ENCODE measurements at regions of chr13 and their contacts with region 1.

Region 1: DNA sequence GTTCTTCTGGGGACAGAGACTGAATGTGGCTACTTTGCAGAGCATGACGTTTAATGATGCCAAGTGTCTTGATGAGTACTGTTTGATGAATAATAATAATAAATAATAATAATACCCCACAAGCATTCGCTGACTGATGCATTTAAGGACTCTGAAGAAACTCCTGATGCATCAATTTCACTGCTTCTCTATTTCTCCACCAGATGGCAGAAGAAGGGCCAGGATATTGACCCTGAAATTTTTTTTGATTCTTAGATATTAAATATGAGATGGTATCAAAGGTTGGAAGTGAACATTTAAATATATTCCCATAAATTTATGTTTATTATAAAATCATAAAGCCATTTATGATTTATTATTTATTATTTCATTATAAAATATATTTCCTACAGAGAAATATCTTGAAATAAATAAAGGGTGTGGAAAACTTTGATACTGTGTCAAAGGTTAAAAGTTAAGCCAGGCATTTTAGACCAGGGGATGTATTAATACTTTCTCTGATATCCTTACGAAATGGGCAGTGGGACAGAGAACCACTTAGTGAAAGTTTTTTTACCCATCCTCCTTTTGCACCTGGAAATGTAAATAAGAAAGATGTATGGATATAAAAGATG is 170.9 kb downstream of the LACC1 start:
- DNase-seq: peak in 1 of 2 donors; percentile 13
- ATAC-seq: peak in 1 of 8 donors; percentile 20
- H3K4me3 ChIP-seq: no peak overlapping the region
- H3K27ac ChIP-seq: no peak overlapping the region
- H3K4me1 ChIP-seq: peaks cover 0 to 15% (median 2%) of the 10 kb centered on the region in 9 donors
- H3K27me3 ChIP-seq: peaks cover 0 to 6% (median 0%) of the 10 kb centered on the region in 7 donors
- CTCF ChIP-seq: peak; percentile 75 to 94 (median 86)

Region 2: DNA sequence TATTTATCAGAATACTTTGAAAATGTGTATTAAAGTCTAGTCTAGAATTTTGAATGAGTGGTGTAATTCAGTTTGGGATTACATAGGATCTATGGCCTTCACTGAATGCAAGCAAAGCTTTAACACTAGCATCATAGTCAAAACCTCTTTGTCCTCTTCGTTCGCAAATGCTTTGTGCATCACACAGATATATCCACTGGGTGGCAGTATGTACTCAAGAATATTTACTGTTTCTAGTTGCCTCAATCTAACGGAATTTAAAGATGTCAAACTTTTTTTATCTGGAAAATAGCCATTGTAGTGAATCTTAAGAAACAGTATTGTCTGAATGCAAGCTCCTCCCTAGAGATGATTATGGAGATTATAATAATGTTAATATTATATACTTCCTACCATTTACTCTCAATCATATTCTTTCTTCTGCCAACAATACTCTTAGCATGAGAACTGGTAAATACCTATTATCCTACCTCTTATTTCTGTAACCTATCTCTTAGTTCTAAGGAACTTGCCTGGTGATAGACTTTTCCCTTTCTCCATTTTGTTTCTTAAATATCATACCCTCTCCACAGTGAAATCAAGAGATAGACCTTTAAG is 145.0 kb before region 1 on chr13:
- intact Hi-C with region 1: loop called (anchors 2 to 10 kb)
- DNase-seq: peak in 1 of 2 donors; percentile 42
- ATAC-seq: peak in 6 of 8 donors; percentile 63 to 78 (median 68)
- H3K4me3 ChIP-seq: no peak overlapping the region
- H3K27ac ChIP-seq: no peak overlapping the region
- H3K4me1 ChIP-seq: peaks cover 0 to 17% (median 5%) of the 10 kb centered on the region in 9 donors
- H3K27me3 ChIP-seq: peaks cover 0 to 18% (median 0%) of the 10 kb centered on the region in 7 donors
- CTCF ChIP-seq: peak; percentile 65 to 90 (median 81)

Region 3: DNA sequence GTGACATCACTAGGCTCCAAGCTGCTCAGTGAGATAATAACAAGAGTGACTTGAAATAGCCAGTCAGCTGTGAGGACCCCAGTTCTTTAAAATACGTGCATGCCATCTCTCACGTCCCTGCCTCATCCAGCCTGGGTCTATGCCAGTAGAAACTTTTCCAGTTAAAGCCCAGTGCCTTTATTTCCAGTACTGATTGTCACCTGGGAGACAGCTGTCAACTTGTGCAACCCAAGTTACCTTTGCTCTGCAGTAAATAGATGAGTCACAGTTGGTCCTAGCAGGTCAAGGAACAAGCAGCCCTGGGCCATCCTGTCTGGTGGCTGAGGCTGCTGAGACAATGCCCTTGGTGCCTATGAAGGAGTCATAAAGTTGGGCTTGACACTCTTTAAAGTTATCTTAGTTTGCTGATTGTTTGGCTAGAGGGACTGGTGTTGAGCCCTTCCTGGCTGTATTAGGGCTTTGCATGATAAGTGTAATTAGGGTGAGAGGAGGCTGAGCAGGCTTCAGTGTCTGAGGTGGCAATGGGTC is 57.8 kb after region 1 on chr13:
- intact Hi-C with region 1: loop called in 4 of 10 experiments (anchors 2 to 5 kb)
- DNase-seq: peak; percentile 53 to 54
- ATAC-seq: peak; percentile 56 to 95 (median 78)
- H3K4me3 ChIP-seq: no peak overlapping the region
- H3K27ac ChIP-seq: peak overlapping the region; percentile 56 to 80 (median 72)
- H3K4me1 ChIP-seq: peaks cover 14 to 80% (median 42%) of the 10 kb centered on the region in 9 donors
- H3K27me3 ChIP-seq: no peaks in the 10 kb centered on the region
- CTCF ChIP-seq: no peak

Region 4: GRCh38 chr13:44141725-44142539 is 91.4 kb after region 1 on chr13:
- intact Hi-C with region 1: loop called in 5 of 10 experiments (anchors 5 to 10 kb)
- DNase-seq: peak; percentile 98 to 99
- ATAC-seq: peak; percentile 99 to 100 (median 100)
- H3K4me3 ChIP-seq: peak overlapping the region; percentile 50 to 79 (median 58)
- H3K27ac ChIP-seq: peak overlapping the region; percentile 91 to 99 (median 96)
- H3K4me1 ChIP-seq: peaks cover 5 to 22% (median 10%) of the 10 kb centered on the region in 9 donors
- H3K27me3 ChIP-seq: no peaks in the 10 kb centered on the region
- CTCF ChIP-seq: peak in 2 of 9 donors; percentile 9 to 21

Region 5: GRCh38 chr13:44293908-44294735 is 243.6 kb after region 1 on chr13:
- intact Hi-C with region 1: loop called in 1 of 10 experiments (anchors 10 kb)
- DNase-seq: no peak
- ATAC-seq: peak in 4 of 8 donors; percentile 37 to 64 (median 56)
- H3K4me3 ChIP-seq: no peak overlapping the region
- H3K27ac ChIP-seq: peak overlapping the region in 6 of 10 donors; percentile 12 to 59 (median 36)
- H3K4me1 ChIP-seq: peaks cover 0 to 38% (median 29%) of the 10 kb centered on the region in 9 donors
- H3K27me3 ChIP-seq: no peaks in the 10 kb centered on the region
- CTCF ChIP-seq: no peak

Region 6: DNA sequence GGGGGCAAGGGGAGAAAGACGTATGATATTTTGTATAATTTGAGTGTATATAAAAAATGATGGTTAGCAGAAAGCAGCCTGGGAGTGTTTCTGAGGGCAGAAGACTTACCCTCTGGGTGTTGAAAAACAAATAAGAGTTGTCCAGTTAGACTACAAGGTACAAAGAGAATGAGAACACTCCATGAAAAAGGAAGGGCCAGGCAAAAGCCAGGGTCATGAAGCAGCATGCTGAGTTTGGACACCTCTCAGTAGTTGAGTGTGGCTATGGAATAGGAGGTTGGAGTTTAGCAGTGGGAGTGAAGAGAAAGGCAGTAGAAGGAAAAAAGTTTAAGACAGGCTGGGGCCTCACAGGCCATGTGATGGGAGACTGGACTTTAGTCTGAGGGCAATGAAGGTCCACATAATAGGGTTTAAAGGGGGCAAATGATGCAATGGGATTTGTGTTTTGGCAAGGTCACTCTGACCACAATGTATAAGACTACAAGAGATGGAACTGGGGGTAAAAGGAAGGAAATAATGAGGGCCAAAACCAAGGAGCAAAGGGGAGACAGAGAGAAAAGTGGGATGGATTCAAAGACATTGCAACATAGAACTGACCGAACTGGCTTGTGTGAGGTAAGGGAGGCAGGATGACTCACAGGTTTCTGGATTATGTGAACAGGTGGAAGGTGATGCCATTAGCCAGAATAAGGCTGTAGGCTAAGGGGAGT is 399.6 kb after region 1 on chr13:
- intact Hi-C with region 1: loop called in 1 of 10 experiments (anchors 10 kb)
- DNase-seq: no peak
- ATAC-seq: peak in 1 of 8 donors; percentile 14
- H3K4me3 ChIP-seq: no peak overlapping the region
- H3K27ac ChIP-seq: no peak overlapping the region
- H3K4me1 ChIP-seq: peaks cover 0 to 8% (median 0%) of the 10 kb centered on the region in 9 donors
- H3K27me3 ChIP-seq: no peaks in the 10 kb centered on the region
- CTCF ChIP-seq: no peak

Region 7: DNA sequence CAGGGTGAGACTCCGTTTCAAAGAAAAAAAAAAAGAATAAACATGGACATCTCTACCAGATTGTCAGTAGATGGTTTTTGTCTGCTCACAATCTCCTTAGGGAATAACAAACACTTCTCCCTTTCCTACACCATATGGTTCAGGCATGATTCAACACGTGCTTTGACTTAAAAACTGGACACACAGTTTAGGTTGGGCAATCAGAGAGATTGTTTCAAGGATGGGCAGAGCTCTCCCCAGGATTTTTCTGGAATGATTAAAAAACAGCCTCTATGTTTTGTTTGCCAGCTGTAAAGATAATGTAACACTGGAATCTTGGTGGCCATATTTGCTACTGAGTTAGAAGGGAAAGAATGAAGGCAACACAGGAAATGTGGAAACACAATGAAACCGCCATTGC is 675.7 kb after region 1 on chr13:
- intact Hi-C with region 1: no loop called
- DNase-seq: no peak
- ATAC-seq: peak in 1 of 8 donors; percentile 47
- H3K4me3 ChIP-seq: no peak overlapping the region
- H3K27ac ChIP-seq: no peak overlapping the region
- H3K4me1 ChIP-seq: peaks cover 0 to 3% (median under 1%) of the 10 kb centered on the region in 9 donors
- H3K27me3 ChIP-seq: no peaks in the 10 kb centered on the region
- CTCF ChIP-seq: no peak